Lower leg skin (tissue), 4 donors: ENCODE measurements at regions of chr12 and their contacts with region 1.

Region 1: GRCh38 chr12:83082690-83083276 is 396.1 kb downstream of the TMTC2 start:
- DNase-seq: no peak
- H3K4me3 ChIP-seq: no peak overlapping the region
- CTCF ChIP-seq: no peak
- POLR2A ChIP-seq: no peak

Region 2: GRCh38 chr12:83265808-83266207 is 183.0 kb after region 1 on chr12:
- intact Hi-C with region 1: loop called (anchors 5 kb)
- DNase-seq: no peak
- H3K4me3 ChIP-seq: no peak overlapping the region
- CTCF ChIP-seq: no peak
- POLR2A ChIP-seq: no peak